H1 (cell line): ENCODE measurements at regions of chr18 and their contacts with region 1.

Region 1: DNA sequence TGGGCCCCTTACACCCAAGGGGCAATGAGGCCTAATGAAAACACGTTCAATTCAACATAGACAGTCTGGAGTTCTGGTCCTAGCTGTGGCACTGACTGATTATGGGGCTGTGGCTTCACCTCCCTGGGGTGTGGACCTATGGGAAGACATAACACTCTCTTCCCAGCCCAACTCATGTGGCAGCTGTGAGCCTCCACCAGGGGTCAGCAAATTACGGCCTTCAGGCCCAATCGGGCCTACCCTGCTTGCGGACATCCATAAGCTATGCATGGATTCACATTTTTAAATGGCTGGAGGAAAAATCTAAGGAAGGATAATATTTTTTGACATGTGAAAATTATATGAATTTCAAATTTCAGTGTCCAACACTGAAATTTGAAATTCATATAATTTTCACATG is 101.3 kb downstream of the LOXHD1 start:
- DNase-seq: peak; percentile 21 to 76
- H3K4me3 ChIP-seq: no peak overlapping the region
- H3K27ac ChIP-seq: no peak overlapping the region
- H3K4me1 ChIP-seq: peaks cover 0 to 3% (median 0%) of the 10 kb centered on the region in 4 experiments; a peak in 1 of 7 replicates
- H3K27me3 ChIP-seq: no peaks in the 10 kb centered on the region
- CTCF ChIP-seq: peak; percentile 85 to 88 (median 88)
- EP300 ChIP-seq: no peak
- POLR2A ChIP-seq: no peak
- RAD21 ChIP-seq: peak; percentile 88 to 91

Region 2: DNA sequence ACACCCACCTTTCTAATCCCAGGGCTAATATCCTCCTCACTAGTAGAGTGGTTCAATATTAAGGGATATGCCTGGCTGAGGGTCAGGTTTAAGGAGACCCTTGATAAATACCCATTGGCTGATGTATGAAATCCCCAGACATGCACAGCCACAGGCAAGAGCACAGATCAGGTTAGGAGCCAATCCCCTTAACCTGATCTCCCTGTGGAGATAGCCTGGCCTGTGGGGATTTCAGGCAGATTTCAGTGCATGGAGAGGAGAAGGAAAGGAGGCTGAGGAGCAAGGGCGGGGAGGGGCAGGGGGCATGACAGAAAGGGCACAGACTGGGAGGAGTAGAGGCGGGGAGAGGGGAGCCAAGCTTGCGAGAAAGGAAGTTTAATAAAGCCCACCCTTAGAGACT is 27.7 kb before region 1 on chr18:
- CTCF ChIA-PET with region 1: interaction called, 18 read pairs
- POLR2A ChIA-PET with region 1: no interaction called
- DNase-seq: no peak
- H3K4me3 ChIP-seq: no peak overlapping the region
- H3K27ac ChIP-seq: no peak overlapping the region
- H3K4me1 ChIP-seq: no peaks in the 10 kb centered on the region; a peak in 1 of 7 replicates
- H3K27me3 ChIP-seq: no peaks in the 10 kb centered on the region
- CTCF ChIP-seq: no peak
- EP300 ChIP-seq: no peak
- POLR2A ChIP-seq: no peak
- RAD21 ChIP-seq: no peak

Region 3: GRCh38 chr18:46577546-46577945 is 21.8 kb after region 1 on chr18:
- CTCF ChIA-PET with region 1: interaction called, 30 read pairs
- POLR2A ChIA-PET with region 1: no interaction called
- DNase-seq: no peak
- H3K4me3 ChIP-seq: no peak overlapping the region
- H3K27ac ChIP-seq: no peak overlapping the region
- H3K4me1 ChIP-seq: no peaks in the 10 kb centered on the region
- H3K27me3 ChIP-seq: no peaks in the 10 kb centered on the region
- CTCF ChIP-seq: no peak
- EP300 ChIP-seq: no peak
- POLR2A ChIP-seq: no peak
- RAD21 ChIP-seq: no peak

Region 4: GRCh38 chr18:46622999-46623398 is 67.3 kb after region 1 on chr18:
- CTCF ChIA-PET with region 1: interaction called, 64 read pairs
- POLR2A ChIA-PET with region 1: no interaction called
- DNase-seq: no peak
- H3K4me3 ChIP-seq: no peak overlapping the region
- H3K27ac ChIP-seq: no peak overlapping the region
- H3K4me1 ChIP-seq: peaks cover 0 to 3% (median 0%) of the 10 kb centered on the region in 4 experiments; a peak in 1 of 7 replicates
- H3K27me3 ChIP-seq: no peaks in the 10 kb centered on the region
- CTCF ChIP-seq: peak in 2 of 3 experiments; percentile 4 to 19; a peak in 2 of 4 replicates
- EP300 ChIP-seq: no peak
- POLR2A ChIP-seq: no peak
- RAD21 ChIP-seq: peak; percentile 41 to 47

Region 5: DNA sequence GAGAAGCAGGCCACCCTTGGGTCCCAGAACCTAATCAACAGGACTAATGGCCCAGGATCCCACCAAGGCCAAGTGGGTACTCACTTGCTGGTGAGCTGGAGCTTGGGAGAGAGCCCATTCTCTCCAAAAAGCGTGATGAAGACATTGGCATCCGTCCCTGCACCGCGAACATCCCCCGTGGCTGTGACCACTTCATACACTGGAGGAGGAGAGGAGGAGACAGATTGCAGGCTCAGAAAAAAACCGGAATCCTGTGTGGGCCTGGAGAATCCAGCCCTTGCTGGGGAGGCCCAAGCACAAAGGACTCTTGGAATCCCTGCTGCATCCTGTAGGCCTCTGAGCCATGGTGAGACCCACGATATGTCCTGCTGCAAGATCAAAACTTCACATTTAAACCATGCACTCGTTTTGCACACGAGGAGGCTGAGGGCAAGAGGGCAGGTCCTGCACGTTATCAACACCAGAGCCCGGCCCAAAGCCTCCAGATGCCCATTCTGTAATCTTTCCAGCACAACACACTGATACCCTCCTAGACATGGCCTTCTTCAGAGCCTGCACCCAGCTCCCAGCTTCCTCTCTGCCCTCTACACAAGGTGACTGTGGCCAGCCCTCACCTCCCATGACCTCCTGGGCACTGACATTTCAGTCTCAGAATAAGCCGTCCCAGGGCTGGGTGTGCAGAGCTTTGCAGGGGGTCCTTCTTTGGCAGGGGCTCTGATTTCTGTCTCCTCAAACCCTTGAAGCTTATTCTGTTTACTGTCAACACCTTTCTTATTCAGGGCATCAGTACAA is 93.5 kb after region 1 on chr18:
- CTCF ChIA-PET with region 1: interaction called, 148 read pairs
- POLR2A ChIA-PET with region 1: no interaction called
- DNase-seq: no peak
- H3K4me3 ChIP-seq: no peak overlapping the region
- H3K27ac ChIP-seq: no peak overlapping the region
- H3K4me1 ChIP-seq: no peaks in the 10 kb centered on the region; a peak in 1 of 7 replicates
- H3K27me3 ChIP-seq: no peaks in the 10 kb centered on the region
- CTCF ChIP-seq: no peak
- EP300 ChIP-seq: no peak
- POLR2A ChIP-seq: no peak
- RAD21 ChIP-seq: no peak